Right cardiac atrium (tissue), 5 donors: ENCODE measurements at regions of chr11 and their contacts with region 1.

Region 1: DNA sequence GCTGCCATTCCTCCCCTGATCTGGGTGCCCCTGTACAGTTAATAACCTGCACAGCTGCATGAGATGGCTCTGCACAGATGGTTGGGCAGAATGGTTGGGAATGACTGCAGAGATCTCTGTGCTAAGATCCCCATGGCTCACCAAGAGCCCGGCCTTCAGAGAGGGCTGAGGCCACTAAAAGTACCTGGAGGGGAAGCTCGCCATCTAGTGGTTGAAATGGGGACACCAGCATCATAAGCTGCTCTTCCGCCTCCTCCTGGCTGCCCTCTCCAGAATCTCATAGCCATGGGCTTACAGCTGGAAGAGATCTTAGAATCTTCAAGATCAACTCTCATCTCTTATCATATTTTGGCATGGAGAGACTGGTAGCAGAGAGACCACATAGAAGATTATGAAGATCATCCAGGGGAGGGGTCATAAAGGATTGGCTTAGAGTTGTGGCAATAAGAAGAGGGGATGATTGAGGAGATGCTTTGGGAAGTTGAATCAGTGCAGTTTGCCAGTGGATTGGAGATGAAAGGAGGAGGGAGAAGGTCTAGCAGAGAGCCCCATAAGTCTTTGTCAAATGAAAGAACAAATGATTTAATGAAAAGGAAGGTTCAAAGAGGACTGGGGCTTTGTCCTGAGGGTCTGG is 22.0 kb upstream of the TLCD5 start:
- DNase-seq: peak; percentile 69 to 85 (median 74)
- ATAC-seq: peak; percentile 69 to 71
- H3K4me3 ChIP-seq: no peak overlapping the region
- H3K27ac ChIP-seq: no peak overlapping the region
- H3K4me1 ChIP-seq: no peaks in the 10 kb centered on the region
- H3K27me3 ChIP-seq: no peaks in the 10 kb centered on the region

Region 2: GRCh38 chr11:120172054-120172911 is 130.8 kb before region 1 on chr11:
- intact Hi-C with region 1: loop called (anchors 2 to 5 kb)
- DNase-seq: peak; percentile 62 to 87 (median 86)
- ATAC-seq: peak; percentile 65
- H3K4me3 ChIP-seq: no peak overlapping the region
- H3K27ac ChIP-seq: no peak overlapping the region
- H3K4me1 ChIP-seq: no peaks in the 10 kb centered on the region
- H3K27me3 ChIP-seq: no peaks in the 10 kb centered on the region

Region 3: GRCh38 chr11:120182790-120183491 is 120.2 kb before region 1 on chr11:
- intact Hi-C with region 1: loop called in 1 of 4 experiments (anchors 5 kb)
- DNase-seq: peak; percentile 80 to 85 (median 83)
- ATAC-seq: peak in 1 of 2 donors; percentile 16
- H3K4me3 ChIP-seq: no peak overlapping the region
- H3K27ac ChIP-seq: no peak overlapping the region
- H3K4me1 ChIP-seq: peaks cover 7% of the 10 kb centered on the region
- H3K27me3 ChIP-seq: no peaks in the 10 kb centered on the region

Region 4: GRCh38 chr11:120235024-120235861 is 67.9 kb before region 1 on chr11:
- intact Hi-C with region 1: loop called (anchors 2 to 5 kb)
- DNase-seq: peak; percentile 59 to 87 (median 79)
- ATAC-seq: peak; percentile 67 to 69
- H3K4me3 ChIP-seq: no peak overlapping the region
- H3K27ac ChIP-seq: no peak overlapping the region
- H3K4me1 ChIP-seq: no peaks in the 10 kb centered on the region
- H3K27me3 ChIP-seq: no peaks in the 10 kb centered on the region